HEK293 (cell line): ENCODE measurements at regions of chr22 and their contacts with region 1.

Region 1: DNA sequence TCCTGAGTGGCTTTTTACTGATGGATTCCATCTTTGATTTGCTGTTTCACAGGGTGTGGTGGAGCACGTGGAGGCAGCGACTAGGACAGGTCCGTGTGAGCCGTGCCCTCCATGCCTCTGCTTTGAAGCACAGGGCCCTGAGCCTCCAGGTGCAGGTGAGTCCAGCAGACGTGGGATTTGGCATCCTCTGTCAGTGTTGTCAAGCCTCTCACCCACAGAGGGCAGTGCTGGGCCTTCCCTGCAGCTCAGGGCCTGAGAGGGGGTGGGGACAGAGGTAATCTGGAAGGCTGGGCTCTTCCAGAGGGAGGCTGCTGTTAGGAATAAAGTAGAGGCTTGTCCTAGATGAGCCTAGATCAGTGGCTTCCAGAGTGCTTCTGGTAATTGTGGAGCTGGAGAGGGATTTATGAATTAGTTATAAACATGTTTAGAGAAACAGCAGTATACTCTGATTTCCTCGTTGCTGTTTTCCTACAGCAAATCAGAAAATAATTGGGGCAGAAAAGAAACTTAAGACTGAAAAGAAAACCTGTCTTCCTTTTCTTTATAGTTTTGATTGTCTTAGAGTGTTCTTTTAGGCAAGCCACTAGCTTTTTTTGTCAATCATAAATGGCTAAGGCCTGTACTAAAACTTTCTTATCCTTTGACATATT is 65.0 kb downstream of the SFI1 start:
- H3K4me3 ChIP-seq: no peak overlapping the region
- H3K27ac ChIP-seq: 0 out of 2 replicates have a peak overlapping the region, but pooled peaks have one; percentile 30
- H3K4me1 ChIP-seq: no peaks in the 10 kb centered on the region
- CTCF ChIP-seq: peak; percentile 81

Region 2: GRCh38 chr22:31544481-31545480 is 16.6 kb before region 1 on chr22:
- CTCF ChIA-PET with region 1: interaction called, 17 read pairs
- POLR2A ChIA-PET with region 1: interaction called, 3 read pairs
- H3K4me3 ChIP-seq: no peak overlapping the region
- H3K27ac ChIP-seq: no peak overlapping the region
- H3K4me1 ChIP-seq: no peaks in the 10 kb centered on the region
- CTCF ChIP-seq: no peak

Region 3: DNA sequence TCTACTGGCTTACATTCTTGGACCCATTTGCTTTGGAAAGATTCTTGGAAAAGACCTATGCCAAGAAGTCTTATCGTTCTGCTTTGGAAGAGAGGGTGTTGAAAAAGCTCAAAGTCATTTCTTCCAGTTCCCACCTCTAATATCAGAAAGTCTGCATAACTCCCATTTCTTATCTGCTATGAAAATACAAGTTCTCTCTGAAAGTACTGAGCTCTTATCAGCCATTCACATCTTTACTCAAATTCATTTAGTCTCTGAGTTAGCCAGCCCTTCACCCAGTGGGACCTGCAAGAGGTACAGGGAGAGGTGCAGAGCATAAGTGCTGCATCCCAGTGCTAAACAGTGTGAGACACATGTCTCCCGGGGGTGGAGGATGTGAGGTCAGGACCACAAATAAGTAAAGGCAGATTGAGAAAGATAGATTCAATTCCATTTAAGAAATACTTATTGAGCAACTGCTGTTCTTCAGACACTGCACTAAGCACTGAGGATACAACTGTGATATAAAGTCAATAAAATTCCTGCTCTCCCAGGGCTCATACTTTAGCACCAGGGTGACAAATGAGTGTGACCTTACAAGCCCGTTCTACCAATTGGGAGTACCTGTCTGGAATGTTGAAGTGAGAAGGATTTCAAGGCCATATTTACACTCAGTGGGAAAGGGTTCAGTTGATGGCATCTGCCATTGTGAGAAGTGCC is 23.9 kb after region 1 on chr22:
- CTCF ChIA-PET with region 1: interaction called, 12 read pairs
- POLR2A ChIA-PET with region 1: no interaction called
- H3K4me3 ChIP-seq: no peak overlapping the region
- H3K27ac ChIP-seq: no peak overlapping the region
- H3K4me1 ChIP-seq: no peaks in the 10 kb centered on the region
- CTCF ChIP-seq: no peak

Region 4: DNA sequence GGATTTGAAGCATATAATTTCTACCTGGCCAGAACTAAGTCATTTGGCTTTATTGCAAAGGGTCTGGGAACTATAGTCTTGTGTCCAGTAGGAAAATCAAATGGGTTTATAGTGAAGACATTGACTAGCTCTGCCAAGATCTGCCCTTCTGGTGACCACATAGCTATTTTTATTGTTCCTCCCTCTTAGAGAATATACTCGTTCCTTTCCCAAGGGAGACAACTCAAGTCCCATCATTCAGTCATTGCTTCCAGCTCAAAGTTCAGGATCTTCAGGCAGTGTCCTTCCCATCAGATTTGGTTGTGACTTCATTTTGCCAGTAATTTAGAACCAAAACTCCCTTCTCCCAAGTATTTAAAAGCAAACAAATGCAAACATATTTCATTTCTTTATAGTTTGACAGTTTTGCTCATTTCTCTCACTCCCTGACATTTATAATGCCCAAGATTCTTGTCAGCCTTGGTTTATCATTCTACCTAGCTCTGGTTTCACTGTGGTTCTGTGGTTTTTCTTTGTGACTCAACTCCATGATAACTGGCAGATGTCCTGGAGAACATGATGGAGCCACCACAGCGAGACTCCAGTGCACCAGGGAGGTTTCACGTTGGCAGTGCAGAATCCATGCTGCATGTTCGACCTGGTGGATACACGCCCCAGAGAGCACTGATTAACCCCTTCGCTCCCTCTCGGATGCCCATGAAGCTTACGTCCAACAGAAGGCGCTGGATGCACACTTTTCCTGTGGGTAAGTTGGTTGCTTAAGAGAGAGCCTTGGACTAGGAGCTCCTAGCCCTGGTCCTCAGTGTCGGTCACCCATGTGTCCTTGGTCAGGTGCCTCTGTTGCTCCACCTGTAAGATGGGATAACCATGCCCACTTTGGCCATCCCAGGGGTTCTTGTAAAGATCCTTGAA is 257.4 kb after region 1 on chr22:
- CTCF ChIA-PET with region 1: no interaction called
- POLR2A ChIA-PET with region 1: no interaction called
- H3K4me3 ChIP-seq: no peak overlapping the region
- H3K27ac ChIP-seq: no peak overlapping the region
- H3K4me1 ChIP-seq: no peaks in the 10 kb centered on the region
- CTCF ChIP-seq: no peak